HEK293 (cell line): ENCODE measurements at regions of chr17 and their contacts with region 1.

Region 1: GRCh38 chr17:1908699-1909309 is 79.0 kb downstream of the RPA1 start:
- H3K4me3 ChIP-seq: no peak overlapping the region
- H3K27ac ChIP-seq: no peak overlapping the region
- H3K4me1 ChIP-seq: peaks cover 16% of the 10 kb centered on the region
- CTCF ChIP-seq: peak; percentile 59

Region 2: GRCh38 chr17:1787301-1787902 is 121.4 kb before region 1 on chr17:
- CTCF ChIA-PET with region 1: no interaction called
- POLR2A ChIA-PET with region 1: no interaction called
- H3K4me3 ChIP-seq: no peak overlapping the region
- H3K27ac ChIP-seq: no peak overlapping the region; the same call in 1 of the 2 replicates
- H3K4me1 ChIP-seq: peaks cover 3% of the 10 kb centered on the region; the same call in 1 of the 2 replicates
- CTCF ChIP-seq: no peak

Region 3: GRCh38 chr17:1882836-1883235 is 26.0 kb before region 1 on chr17:
- CTCF ChIA-PET with region 1: interaction called, 25 read pairs
- POLR2A ChIA-PET with region 1: no interaction called
- H3K4me3 ChIP-seq: no peak overlapping the region
- H3K27ac ChIP-seq: no peak overlapping the region
- H3K4me1 ChIP-seq: no peaks in the 10 kb centered on the region
- CTCF ChIP-seq: 0 out of 2 replicates have a peak, but pooled peaks have one; percentile 18

Region 4: DNA sequence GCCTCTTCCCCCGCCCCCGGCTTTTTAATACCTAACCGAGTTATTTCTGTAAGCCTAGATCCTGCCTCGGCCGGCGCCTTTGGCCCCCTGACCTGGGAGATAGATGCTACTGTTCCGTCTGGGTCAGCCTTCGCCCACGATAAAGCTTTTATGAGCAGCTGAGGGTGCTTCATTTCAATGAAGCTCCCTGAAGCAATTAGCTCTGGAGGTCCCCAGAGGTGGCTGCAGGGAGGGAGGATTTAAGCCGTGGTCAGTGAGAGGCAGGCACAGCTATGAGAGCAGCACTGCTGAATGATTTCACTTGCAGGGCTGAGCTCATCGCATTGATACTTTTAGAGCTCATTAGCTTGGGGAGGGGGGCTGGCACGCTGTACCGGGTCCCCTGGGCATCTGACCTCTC is 10.4 kb after region 1 on chr17:
- CTCF ChIA-PET with region 1: interaction called, 16 read pairs
- POLR2A ChIA-PET with region 1: interaction called, 3 read pairs
- H3K4me3 ChIP-seq: no peak overlapping the region
- H3K27ac ChIP-seq: no peak overlapping the region
- H3K4me1 ChIP-seq: no peaks in the 10 kb centered on the region
- CTCF ChIP-seq: no peak

Region 5: DNA sequence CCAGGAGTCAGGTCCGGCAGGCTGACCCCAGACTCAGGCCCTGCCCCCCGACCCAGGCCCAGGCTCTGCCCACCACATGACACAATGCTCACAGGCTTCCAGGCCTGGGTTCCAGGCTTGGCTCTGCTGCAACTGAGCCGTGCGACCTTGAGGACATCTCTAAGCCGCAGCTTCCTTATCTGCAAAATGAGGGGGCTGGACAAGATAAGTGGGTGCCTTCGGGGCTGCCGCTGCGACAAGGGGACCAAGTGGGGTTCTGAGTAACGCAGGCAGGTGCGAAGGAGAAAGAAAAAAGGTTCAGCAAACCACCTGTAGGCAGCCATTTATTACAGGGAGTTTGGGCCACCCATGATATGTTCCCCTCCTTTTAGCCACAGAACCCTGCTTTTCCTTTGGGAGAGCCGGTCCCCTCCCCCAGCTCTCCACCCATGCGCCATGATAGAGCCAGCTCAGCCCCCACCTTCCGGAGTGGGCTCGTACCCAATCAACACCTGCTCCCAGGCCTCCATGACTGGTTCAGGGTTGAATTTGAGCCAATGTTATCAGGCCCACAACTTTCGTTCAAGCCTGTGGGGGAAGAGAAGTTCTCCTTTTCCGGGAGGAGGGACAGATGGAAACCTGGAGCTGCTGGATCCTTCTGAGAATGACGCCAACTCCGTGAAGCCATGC is 78.1 kb after region 1 on chr17:
- CTCF ChIA-PET with region 1: no interaction called
- POLR2A ChIA-PET with region 1: no interaction called
- H3K4me3 ChIP-seq: no peak overlapping the region
- H3K27ac ChIP-seq: no peak overlapping the region
- H3K4me1 ChIP-seq: no peaks in the 10 kb centered on the region
- CTCF ChIP-seq: no peak

Region 6: GRCh38 chr17:2041561-2042366 is 133.0 kb after region 1 on chr17 and contains the start of gene OVCA2:
- CTCF ChIA-PET with region 1: interaction called, 13 read pairs
- POLR2A ChIA-PET with region 1: interaction called, 4 read pairs
- H3K4me3 ChIP-seq: peak within 1 kb of the TSS; percentile 70
- H3K27ac ChIP-seq: peak within 1 kb of the TSS; percentile 81
- H3K4me1 ChIP-seq: peaks cover 6% of the 10 kb centered on the region
- CTCF ChIP-seq: peak; percentile 88